H1 (cell line): ENCODE measurements at regions of chr3 and their contacts with region 1.

Region 1: DNA sequence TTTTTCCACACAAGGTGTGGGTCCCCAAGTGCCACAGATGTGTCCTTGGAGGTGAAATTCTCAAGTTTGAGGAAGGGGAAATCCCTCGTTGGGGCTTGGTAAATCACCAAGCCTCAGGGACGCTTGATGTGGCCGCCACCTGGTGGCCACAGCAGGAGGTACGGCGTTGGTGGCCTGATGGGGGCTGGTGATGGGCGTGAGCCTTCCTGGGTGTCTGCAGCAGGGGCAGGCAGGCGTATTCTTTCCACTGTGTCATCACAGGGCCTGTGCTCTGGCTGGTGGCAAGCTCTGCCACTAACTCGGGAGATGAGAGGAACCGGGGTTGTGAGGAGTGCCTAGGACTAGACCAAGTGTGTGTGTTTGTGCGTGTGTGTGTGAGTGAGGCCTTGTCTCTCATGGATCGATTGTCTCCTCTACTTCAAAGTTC is 4.2 kb downstream of the ACOX2 start:
- DNase-seq: peak; percentile 51 to 84
- H3K4me3 ChIP-seq: no peak overlapping the region
- H3K27ac ChIP-seq: no peak overlapping the region
- H3K4me1 ChIP-seq: peaks cover 0 to 3% (median 2%) of the 10 kb centered on the region in 4 experiments; a peak in 4 of 7 replicates
- H3K27me3 ChIP-seq: no peaks in the 10 kb centered on the region
- CTCF ChIP-seq: peak; percentile 82 to 85 (median 85)
- EP300 ChIP-seq: no peak
- POLR2A ChIP-seq: no peak
- RAD21 ChIP-seq: peak; percentile 82 to 85

Region 2: GRCh38 chr3:58419780-58420507 is 112.9 kb before region 1 on chr3:
- CTCF ChIA-PET with region 1: interaction called, 18 read pairs
- POLR2A ChIA-PET with region 1: no interaction called
- DNase-seq: no peak
- H3K4me3 ChIP-seq: no peak overlapping the region
- H3K27ac ChIP-seq: no peak overlapping the region
- H3K4me1 ChIP-seq: peaks cover 0 to 4% (median 1%) of the 10 kb centered on the region in 4 experiments; a peak in 3 of 7 replicates
- H3K27me3 ChIP-seq: no peaks in the 10 kb centered on the region
- CTCF ChIP-seq: no peak
- EP300 ChIP-seq: no peak
- POLR2A ChIP-seq: no peak
- RAD21 ChIP-seq: no peak

Region 3: DNA sequence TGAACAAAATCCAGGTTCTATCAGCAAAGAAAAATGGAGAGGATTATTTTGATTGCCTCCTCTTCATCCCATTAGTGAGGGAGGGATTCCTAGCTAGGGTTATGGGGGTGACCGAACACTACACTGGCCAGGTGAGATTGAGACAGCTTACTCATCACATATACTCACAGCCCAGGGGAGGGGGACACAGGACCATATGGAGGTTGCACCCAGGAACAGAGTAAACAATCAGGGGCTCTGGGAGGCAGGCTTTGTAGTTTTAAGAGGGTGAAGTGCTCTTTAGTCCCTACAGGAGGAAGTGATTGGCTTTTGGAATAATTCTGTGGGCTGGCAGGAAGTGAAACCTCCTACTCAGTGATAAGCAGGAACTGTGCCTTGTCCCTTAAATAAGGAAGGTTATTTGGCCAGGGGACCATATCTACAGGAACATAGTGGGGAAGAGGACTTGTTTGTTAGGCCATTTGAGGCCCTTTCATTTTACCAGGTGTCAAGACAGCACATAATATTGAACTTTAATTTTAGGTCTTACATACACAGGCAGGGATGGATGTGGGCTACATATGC is 58.4 kb before region 1 on chr3:
- CTCF ChIA-PET with region 1: no interaction called
- POLR2A ChIA-PET with region 1: no interaction called
- DNase-seq: no peak
- H3K4me3 ChIP-seq: no peak overlapping the region
- H3K27ac ChIP-seq: no peak overlapping the region
- H3K4me1 ChIP-seq: peaks cover 0 to 7% (median 4%) of the 10 kb centered on the region in 4 experiments; a peak in 4 of 7 replicates
- H3K27me3 ChIP-seq: no peaks in the 10 kb centered on the region
- CTCF ChIP-seq: no peak
- EP300 ChIP-seq: no peak
- POLR2A ChIP-seq: no peak
- RAD21 ChIP-seq: no peak

Region 4: GRCh38 chr3:58491506-58492402 is 41.1 kb before region 1 on chr3 and contains the start of gene KCTD6:
- CTCF ChIA-PET with region 1: interaction called, 68 read pairs
- POLR2A ChIA-PET with region 1: no interaction called
- DNase-seq: peak; percentile 87 to 95
- H3K4me3 ChIP-seq: peak within 1 kb of the TSS; percentile 78 to 88 (median 82)
- H3K27ac ChIP-seq: peak within 1 kb of the TSS; percentile 3; the same call in 1 of the 2 replicates
- H3K4me1 ChIP-seq: peaks cover 5 to 16% (median 6%) of the 10 kb centered on the region in 4 experiments
- H3K27me3 ChIP-seq: peaks cover 0 to 4% (median 0%) of the 10 kb centered on the region in 4 experiments; a peak in 1 of 7 replicates
- CTCF ChIP-seq: peak; percentile 73 to 96 (median 85)
- EP300 ChIP-seq: peak in 1 of 2 experiments; percentile 61; a peak in 1 of 3 replicates
- POLR2A ChIP-seq: peak in 1 of 2 experiments; percentile 48; a peak in 1 of 3 replicates
- RAD21 ChIP-seq: peak; percentile 57 to 73
- total RNA-seq, gene KCTD6: 21.4 and 22.2 TPM in 2 replicates

Region 5: DNA sequence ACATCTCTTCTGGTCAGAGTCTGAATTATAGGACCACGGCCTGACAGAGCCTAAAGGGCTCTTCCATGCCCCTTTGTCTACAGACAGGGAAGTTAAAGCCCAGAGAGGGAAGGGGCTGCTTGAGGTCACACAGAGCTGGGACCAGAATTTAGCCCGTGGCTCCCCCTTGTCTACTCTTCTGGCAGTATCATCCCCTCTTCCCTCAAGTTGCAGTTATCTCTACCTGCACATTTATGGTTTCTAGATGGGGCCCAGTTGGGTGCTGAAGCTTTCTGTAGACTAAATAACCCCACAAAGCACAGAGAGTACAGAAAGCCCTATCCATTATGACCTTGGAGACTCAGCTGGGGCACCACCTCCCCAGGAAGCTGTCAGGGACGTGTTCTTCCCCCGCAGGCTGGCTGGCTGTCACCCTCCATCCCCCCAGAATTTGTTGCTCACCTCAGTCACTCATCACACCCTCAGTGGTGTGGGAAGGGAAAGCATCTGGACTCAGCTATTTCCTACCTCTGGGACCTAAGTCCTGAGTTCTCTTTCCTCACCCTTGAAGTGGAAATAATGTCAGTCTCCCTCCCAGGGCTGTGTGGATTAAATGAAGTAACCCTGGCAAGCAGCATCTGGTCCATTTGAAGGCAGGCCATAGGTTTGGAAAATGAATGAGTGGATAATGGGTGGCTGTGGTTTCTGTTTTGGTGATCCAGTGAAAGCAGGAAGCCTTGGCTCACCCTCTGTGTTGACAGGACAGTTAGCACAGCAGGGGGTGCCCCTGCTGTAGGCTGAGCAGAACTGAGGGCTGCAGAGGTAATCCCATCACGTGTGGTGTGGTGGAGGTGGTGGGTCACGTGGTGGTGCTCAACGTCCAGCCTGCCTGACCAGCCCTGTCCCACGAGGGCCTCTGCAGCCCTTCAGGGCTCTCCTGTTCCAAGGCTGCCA is 12.1 kb before region 1 on chr3:
- CTCF ChIA-PET with region 1: interaction called, 64 read pairs
- POLR2A ChIA-PET with region 1: no interaction called
- DNase-seq: no peak
- H3K4me3 ChIP-seq: no peak overlapping the region
- H3K27ac ChIP-seq: no peak overlapping the region
- H3K4me1 ChIP-seq: peaks cover 0 to 12% (median 6%) of the 10 kb centered on the region in 4 experiments; a peak in 6 of 7 replicates
- H3K27me3 ChIP-seq: no peaks in the 10 kb centered on the region; a peak in 1 of 7 replicates
- CTCF ChIP-seq: no peak
- EP300 ChIP-seq: no peak
- POLR2A ChIP-seq: no peak
- RAD21 ChIP-seq: no peak

Region 6: DNA sequence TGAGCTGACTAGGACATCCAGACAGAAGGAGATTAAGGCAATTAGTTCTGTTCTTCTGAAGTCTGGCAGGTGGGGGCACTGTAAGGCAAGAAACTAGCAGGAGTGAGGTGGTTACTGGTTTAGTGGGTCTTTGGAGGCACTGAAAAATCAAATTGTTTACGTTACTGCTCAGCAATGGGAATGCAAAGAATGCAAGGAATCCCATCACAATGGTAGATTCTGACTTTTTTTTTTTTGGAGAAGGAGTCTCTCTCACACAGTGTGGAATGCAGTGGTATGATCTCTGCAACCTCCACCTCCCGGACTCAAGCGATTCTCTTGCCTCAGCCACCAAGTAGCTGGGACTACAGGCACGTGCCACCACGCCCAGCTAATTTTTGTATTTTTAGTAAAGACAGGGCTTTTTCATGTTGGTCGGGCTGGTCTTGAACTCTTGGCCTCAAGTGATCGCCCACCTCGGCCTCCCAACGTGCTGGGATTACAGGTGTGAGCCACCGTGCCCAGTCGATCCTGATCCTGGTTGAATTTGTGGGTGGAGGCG is 28.0 kb after region 1 on chr3:
- CTCF ChIA-PET with region 1: interaction called, 15 read pairs
- POLR2A ChIA-PET with region 1: interaction called, 4 read pairs
- DNase-seq: peak in 1 of 2 experiments; percentile 78
- H3K4me3 ChIP-seq: no peak overlapping the region
- H3K27ac ChIP-seq: peak overlapping the region; percentile 53
- H3K4me1 ChIP-seq: peaks cover 7 to 16% (median 11%) of the 10 kb centered on the region in 4 experiments
- H3K27me3 ChIP-seq: no peaks in the 10 kb centered on the region
- CTCF ChIP-seq: peak in 2 of 3 experiments; percentile 76 to 84; a peak in 3 of 4 replicates
- EP300 ChIP-seq: peak in 1 of 2 experiments; percentile 98; a peak in 2 of 3 replicates
- POLR2A ChIP-seq: no peak
- RAD21 ChIP-seq: peak; percentile 94 to 95

Region 7: GRCh38 chr3:58577269-58577821 is 44.5 kb after region 1 on chr3 and contains the start of gene FAM107A:
- CTCF ChIA-PET with region 1: interaction called, 19 read pairs
- POLR2A ChIA-PET with region 1: no interaction called
- DNase-seq: peak in 1 of 2 experiments; percentile 59
- H3K4me3 ChIP-seq: no peak within 1 kb of the TSS
- H3K27ac ChIP-seq: no peak within 1 kb of the TSS
- H3K4me1 ChIP-seq: peaks cover 1 to 8% (median 7%) of the 10 kb centered on the region in 4 experiments; a peak in 5 of 7 replicates
- H3K27me3 ChIP-seq: no peaks in the 10 kb centered on the region
- CTCF ChIP-seq: peak; percentile 25 to 50 (median 38); a peak in 3 of 4 replicates
- EP300 ChIP-seq: no peak
- POLR2A ChIP-seq: no peak
- RAD21 ChIP-seq: peak; percentile 6 to 31; a peak in 1 of 4 replicates
- total RNA-seq, gene FAM107A: 0.57 and 0.65 TPM in 2 replicates

Region 8: GRCh38 chr3:58630076-58630709 is 97.4 kb after region 1 on chr3:
- CTCF ChIA-PET with region 1: interaction called, 17 read pairs
- POLR2A ChIA-PET with region 1: interaction called, 3 read pairs
- DNase-seq: peak; percentile 23 to 96
- H3K4me3 ChIP-seq: no peak overlapping the region
- H3K27ac ChIP-seq: no peak overlapping the region
- H3K4me1 ChIP-seq: peaks cover 0 to 4% (median 0%) of the 10 kb centered on the region in 4 experiments; a peak in 2 of 7 replicates
- H3K27me3 ChIP-seq: peaks cover under 1 to 25% (median 5%) of the 10 kb centered on the region in 4 experiments; a peak in 6 of 7 replicates
- CTCF ChIP-seq: peak; percentile 70 to 92 (median 89)
- EP300 ChIP-seq: no peak
- POLR2A ChIP-seq: no peak
- RAD21 ChIP-seq: peak; percentile 92 to 93